GM10248 (cell line): ENCODE measurements at regions of chr2 and their contacts with region 1.

Region 1: DNA sequence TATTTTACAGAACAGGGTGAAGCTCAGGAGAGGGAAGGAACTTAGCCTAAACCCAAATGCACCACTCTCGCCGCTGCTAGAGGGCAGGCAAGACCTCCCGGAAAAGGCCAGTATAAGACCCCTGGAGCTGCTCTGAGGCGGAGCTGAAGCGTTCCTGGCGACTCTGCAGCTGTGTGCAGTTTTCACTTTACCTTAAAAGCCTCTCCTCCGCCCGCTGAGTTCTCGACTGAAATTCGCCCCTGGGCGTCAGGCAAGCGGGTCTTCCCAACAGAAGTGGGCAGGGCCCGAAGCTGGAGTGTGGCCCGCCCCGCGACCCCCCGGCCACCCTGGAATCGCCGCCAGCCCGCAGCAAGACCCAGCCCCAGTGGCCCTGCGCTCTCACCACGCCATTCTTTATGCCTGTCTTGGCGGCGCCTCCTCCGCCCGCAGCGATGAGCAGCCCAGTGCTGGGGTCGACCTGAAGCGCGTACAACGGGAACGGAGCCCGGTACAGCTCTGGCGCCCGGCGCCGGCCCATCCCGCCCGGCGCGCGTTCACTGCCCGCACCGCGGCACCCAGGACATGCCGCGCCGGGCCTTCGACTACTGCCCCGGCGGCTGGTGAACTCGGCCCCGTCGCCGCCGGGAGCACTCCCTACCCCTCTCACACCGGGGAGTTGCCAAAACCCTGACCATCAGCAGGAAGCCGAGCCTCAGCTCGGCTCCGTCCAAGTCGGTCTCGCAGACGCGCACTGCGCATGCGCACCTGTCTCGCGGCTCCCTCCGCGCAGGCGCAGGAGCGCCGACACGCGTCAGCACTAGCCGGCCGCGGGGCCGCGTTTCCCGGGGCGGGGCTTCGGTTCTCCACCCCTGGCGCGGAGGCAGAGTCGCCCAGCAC is at the start of gene PREB:
- DNase-seq: peak; percentile 100
- CTCF ChIP-seq: peak; percentile 43

Region 2: GRCh38 chr2:27123302-27124231 is 10.6 kb before region 1 on chr2 and contains the start of gene ABHD1:
- CTCF ChIA-PET with region 1: interaction called, 22 read pairs
- POLR2A ChIA-PET with region 1: no interaction called
- DNase-seq: peak; percentile 72
- CTCF ChIP-seq: no peak